GM23248 (cell line): ENCODE measurements at regions of chr12 and their contacts with region 1.

Region 1: DNA sequence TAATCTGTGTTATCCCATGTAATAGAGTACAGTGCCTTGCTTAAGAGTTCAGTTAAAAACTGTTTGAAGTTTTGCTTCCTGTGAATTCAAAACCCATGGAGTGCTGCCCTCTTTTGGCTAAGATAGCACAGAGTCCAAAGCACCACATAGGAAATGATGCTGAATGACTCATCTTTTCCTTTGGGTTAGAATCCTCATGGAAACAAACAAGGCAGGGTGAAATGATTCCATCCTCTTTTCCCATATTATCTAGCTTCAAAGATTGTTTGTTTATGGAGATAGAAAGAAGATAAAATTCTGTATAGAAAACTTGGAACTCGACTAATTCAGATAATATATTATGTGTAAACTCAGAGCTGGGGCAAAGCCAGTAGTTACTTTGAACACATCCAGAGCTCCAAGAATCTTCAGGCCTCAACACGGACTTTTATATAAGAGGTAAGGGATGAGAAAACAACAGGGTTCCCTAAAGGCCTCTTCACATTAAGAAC is 87.4 kb downstream of the OTOGL start:
- DNase-seq: peak; percentile 97
- H3K4me3 ChIP-seq: peak overlapping the region; percentile 54
- H3K27ac ChIP-seq: peak overlapping the region; percentile 92
- H3K4me1 ChIP-seq: peaks cover 56% of the 10 kb centered on the region
- H3K27me3 ChIP-seq: no peaks in the 10 kb centered on the region

Region 2: DNA sequence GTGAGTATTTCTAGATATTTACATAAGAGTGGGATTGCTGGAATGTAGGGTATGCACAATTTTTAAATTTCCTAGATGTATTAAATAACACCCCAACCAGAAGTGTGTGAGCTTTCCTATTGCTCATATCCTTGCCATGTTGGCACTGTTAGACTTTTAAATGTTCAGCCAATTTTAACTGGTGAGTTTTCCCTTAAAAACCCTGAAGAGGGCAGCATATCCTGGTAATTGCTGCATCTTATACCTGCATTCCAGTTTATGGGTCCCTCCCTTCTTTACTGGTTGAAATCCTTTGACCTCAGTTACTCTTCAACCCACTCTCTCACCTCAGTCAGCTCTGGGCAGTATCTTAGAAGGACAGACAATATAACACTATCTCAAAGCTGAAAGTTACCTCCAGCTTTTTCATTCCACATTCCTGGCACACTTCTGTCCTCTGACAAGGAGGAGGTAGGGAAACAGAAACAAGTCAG is 766.6 kb before region 1 on chr12:
- in situ Hi-C with region 1: loop called (anchors 10 kb)
- DNase-seq: peak; percentile 94
- H3K4me3 ChIP-seq: no peak overlapping the region
- H3K27ac ChIP-seq: peak overlapping the region; percentile 92
- H3K4me1 ChIP-seq: peaks cover 67% of the 10 kb centered on the region
- H3K27me3 ChIP-seq: no peaks in the 10 kb centered on the region

Region 3: GRCh38 chr12:79555028-79555930 is 631.5 kb before region 1 on chr12:
- in situ Hi-C with region 1: loop called (anchors 10 kb)
- DNase-seq: peak; percentile 67
- H3K4me3 ChIP-seq: no peak overlapping the region
- H3K27ac ChIP-seq: no peak overlapping the region
- H3K4me1 ChIP-seq: peaks cover 22% of the 10 kb centered on the region
- H3K27me3 ChIP-seq: no peaks in the 10 kb centered on the region

Region 4: DNA sequence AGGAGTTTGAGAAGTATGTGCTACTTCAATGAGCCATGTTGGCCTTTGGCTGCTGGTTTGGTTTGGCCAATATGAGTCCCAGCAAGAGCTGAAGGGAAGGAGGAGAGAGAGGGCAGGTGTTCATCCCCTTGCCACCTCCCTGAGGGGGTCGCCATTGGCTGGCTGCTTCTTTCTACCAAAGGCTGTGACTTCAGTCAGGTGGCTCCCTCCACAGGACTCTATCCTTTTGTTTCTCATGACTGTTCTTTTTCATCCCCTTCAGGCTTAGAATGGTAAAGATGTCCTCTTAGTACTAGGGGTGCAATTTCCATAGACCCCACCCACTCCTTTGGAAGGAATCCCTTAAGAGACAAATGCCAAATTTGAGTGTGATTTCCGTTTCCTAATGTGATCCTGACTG is 118.6 kb before region 1 on chr12:
- in situ Hi-C with region 1: no loop called
- DNase-seq: no peak
- H3K4me3 ChIP-seq: no peak overlapping the region
- H3K27ac ChIP-seq: no peak overlapping the region
- H3K4me1 ChIP-seq: peaks cover 6% of the 10 kb centered on the region; the same call in 1 of the 2 replicates
- H3K27me3 ChIP-seq: no peaks in the 10 kb centered on the region

Region 5: GRCh38 chr12:80282761-80283160 is 96.0 kb after region 1 on chr12:
- in situ Hi-C with region 1: no loop called
- DNase-seq: peak; percentile 63
- H3K4me3 ChIP-seq: no peak overlapping the region
- H3K27ac ChIP-seq: no peak overlapping the region
- H3K4me1 ChIP-seq: no peaks in the 10 kb centered on the region
- H3K27me3 ChIP-seq: no peaks in the 10 kb centered on the region